HCT116 (cell line): ENCODE measurements at regions of chr3 and their contacts with region 1.

Region 1: GRCh38 chr3:194134757-194135528 is 1.0 kb upstream of the HES1 start:
- DNase-seq: peak; percentile 88
- ATAC-seq: peak; percentile 61
- H3K4me3 ChIP-seq: peak overlapping the region; percentile 49 to 59
- H3K27ac ChIP-seq: peak overlapping the region; percentile 60
- H3K4me1 ChIP-seq: peaks cover 47 to 78% of the 10 kb centered on the region in 2 experiments
- H3K27me3 ChIP-seq: peaks cover 14% of the 10 kb centered on the region; the same call in 1 of the 2 replicates
- CTCF ChIP-seq: no peak
- POLR2A ChIP-seq: no peak
- RAD21 ChIP-seq: no peak

Region 2: DNA sequence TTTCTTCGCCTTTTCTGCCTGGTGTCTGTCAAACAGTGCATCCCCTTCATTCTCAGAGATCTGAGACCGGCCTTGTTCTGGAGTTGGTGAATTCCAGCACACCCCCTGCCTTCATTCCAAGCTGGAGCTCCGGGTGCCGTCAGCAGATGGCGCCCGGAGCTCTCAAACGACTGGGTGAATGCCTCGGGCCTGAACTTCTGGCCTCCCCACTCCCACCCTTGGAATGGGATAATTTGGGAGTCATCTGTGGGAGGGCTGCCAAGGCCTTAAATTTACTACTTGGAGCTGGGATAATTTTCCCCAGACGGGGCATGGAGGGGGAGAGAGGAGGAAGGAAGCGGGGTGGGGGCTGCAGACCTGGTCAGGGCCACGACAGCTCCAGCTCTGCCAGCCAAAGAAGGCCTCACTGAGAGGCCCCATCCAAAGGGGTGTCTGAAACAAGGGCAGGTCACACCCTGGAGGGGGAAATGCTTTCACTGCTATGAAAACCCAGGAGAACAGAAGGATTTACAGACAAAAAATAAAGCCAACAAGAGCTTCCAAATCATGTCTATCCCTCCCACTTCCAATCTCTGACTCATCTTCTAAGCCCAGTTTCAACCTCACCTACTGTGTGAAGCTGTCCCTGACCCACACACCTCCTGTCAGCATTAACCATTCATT is 354.0 kb before region 1 on chr3:
- CTCF ChIA-PET with region 1: interaction called, 46 read pairs
- POLR2A ChIA-PET with region 1: interaction called, 10 read pairs
- RAD21 ChIA-PET with region 1: interaction called, 4 to 8 read pairs
- intact Hi-C with region 1: loop called (anchors 2 kb)
- DNase-seq: no peak
- ATAC-seq: peak; percentile 79
- H3K4me3 ChIP-seq: no peak overlapping the region
- H3K27ac ChIP-seq: no peak overlapping the region
- H3K4me1 ChIP-seq: peaks cover 28 to 40% of the 10 kb centered on the region in 2 experiments
- H3K27me3 ChIP-seq: peaks cover 19% of the 10 kb centered on the region; the same call in 1 of the 2 replicates
- CTCF ChIP-seq: peak; percentile 80 to 93 (median 85)
- POLR2A ChIP-seq: no peak
- RAD21 ChIP-seq: peak; percentile 95

Region 3: DNA sequence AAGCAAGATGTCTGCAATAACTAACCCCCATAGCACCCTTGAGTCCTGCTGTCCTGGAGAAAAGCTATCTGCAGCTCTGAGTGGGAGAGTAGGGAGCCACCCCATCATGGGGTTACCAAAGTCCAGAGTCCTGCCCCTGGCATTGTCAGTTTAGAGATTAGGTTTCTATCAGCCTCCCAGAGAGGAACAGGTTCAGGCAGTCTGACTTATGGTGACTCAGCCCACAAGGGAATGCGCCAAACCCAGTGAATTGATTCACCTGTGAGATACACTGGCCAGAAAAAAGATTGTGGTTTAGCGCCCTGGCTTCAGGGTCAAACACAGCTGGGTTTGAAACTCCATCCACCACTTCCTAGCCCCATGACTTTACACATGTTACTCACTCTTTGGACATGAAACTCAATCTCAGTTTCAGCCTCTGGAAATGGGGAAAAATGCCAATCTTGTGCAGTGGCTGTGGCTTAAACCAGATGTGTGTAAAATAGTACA is 262.6 kb before region 1 on chr3:
- CTCF ChIA-PET with region 1: no interaction called
- POLR2A ChIA-PET with region 1: interaction called, 4 read pairs
- RAD21 ChIA-PET with region 1: no interaction called
- intact Hi-C with region 1: loop called (anchors 2 kb)
- DNase-seq: peak; percentile 97
- ATAC-seq: peak; percentile 58
- H3K4me3 ChIP-seq: peak overlapping the region in 1 of 2 experiments; percentile 35; a peak in 2 of 4 replicates
- H3K27ac ChIP-seq: peak overlapping the region; percentile 27; the same call in 1 of the 2 replicates
- H3K4me1 ChIP-seq: peaks cover 45 to 88% of the 10 kb centered on the region in 2 experiments
- H3K27me3 ChIP-seq: peaks cover 7% of the 10 kb centered on the region; the same call in 1 of the 2 replicates
- CTCF ChIP-seq: no peak
- POLR2A ChIP-seq: no peak
- RAD21 ChIP-seq: no peak

Region 4: DNA sequence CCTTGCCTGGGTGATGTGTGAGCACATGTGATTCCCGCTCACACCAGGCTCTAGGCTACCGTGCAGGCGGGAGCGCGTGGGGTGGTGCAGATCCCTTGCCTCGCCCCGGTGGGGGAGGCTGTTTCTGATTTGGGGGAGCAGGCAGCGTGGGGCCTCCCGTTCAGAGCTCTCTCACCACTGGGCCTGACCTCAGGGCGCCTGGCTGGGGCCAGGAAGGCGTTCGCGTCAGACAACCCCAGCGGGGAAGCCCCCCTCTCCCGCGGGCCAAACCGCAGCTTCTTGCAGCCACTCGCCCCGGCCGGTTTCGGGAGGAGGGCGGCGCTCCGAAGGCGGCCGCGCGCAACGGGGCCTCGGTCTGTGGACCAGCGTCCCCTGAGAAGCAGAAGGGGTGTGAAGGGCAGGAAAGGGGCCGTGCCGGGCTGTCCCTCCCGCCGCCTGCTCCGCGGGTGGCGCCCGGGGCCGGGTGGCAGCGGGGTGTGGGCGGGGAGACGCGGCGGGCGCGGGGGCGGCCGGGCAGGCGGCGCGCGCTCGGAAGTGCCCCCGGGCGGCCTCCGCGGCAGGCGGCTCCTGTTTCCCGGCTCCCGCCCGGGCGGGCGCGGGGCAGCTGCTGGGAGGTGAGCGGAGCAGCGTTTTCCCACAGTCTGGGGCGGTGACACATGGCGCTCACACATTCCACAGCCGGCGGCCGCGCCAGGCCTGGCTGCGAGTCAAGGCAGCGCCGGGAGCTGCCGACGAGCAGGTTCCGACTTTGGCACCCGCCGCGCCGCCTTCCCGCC is 64.1 kb before region 1 on chr3:
- CTCF ChIA-PET with region 1: interaction called, 3 read pairs
- POLR2A ChIA-PET with region 1: interaction called, 4 read pairs
- RAD21 ChIA-PET with region 1: no interaction called
- intact Hi-C with region 1: loop called (anchors 5 kb)
- DNase-seq: peak; percentile 67
- ATAC-seq: peak; percentile 81
- H3K4me3 ChIP-seq: peak overlapping the region; percentile 31 to 50
- H3K27ac ChIP-seq: peak overlapping the region; percentile 49; the same call in 1 of the 2 replicates
- H3K4me1 ChIP-seq: peaks cover 12 to 33% of the 10 kb centered on the region in 2 experiments
- H3K27me3 ChIP-seq: no peaks in the 10 kb centered on the region; the same call in 1 of the 2 replicates
- CTCF ChIP-seq: no peak
- POLR2A ChIP-seq: no peak
- RAD21 ChIP-seq: no peak

Region 5: GRCh38 chr3:194103983-194104751 is 30.8 kb before region 1 on chr3:
- CTCF ChIA-PET with region 1: no interaction called
- POLR2A ChIA-PET with region 1: no interaction called
- RAD21 ChIA-PET with region 1: no interaction called
- intact Hi-C with region 1: no loop called
- DNase-seq: no peak
- ATAC-seq: no peak
- H3K4me3 ChIP-seq: no peak overlapping the region
- H3K27ac ChIP-seq: no peak overlapping the region
- H3K4me1 ChIP-seq: peaks cover 0 to 4% of the 10 kb centered on the region in 2 experiments; a peak in 1 of 4 replicates
- H3K27me3 ChIP-seq: peaks cover 3% of the 10 kb centered on the region; the same call in 1 of the 2 replicates
- CTCF ChIP-seq: no peak
- POLR2A ChIP-seq: no peak
- RAD21 ChIP-seq: no peak

Region 6: GRCh38 chr3:194323785-194324735 is 189.1 kb after region 1 on chr3:
- CTCF ChIA-PET with region 1: no interaction called
- POLR2A ChIA-PET with region 1: interaction called, 5 read pairs
- RAD21 ChIA-PET with region 1: interaction called in 1 of 2 experiments, 3 read pairs
- intact Hi-C with region 1: loop called (anchors 2 kb)
- DNase-seq: peak; percentile 76
- ATAC-seq: peak; percentile 52
- H3K4me3 ChIP-seq: peak overlapping the region; percentile 44 to 61
- H3K27ac ChIP-seq: peak overlapping the region; percentile 95
- H3K4me1 ChIP-seq: peaks cover 35 to 90% of the 10 kb centered on the region in 2 experiments
- H3K27me3 ChIP-seq: no peaks in the 10 kb centered on the region
- CTCF ChIP-seq: no peak
- POLR2A ChIP-seq: peak; percentile 54
- RAD21 ChIP-seq: no peak